ENCODE measurements at regions of chr7 and their contacts with region 1.

Region 1: GRCh38 chr7:97027427-97028234 is 3.0 kb upstream of the DLX5 start:
- DNase-seq: peak; percentile 83
- ATAC-seq: peak; percentile 82
- H3K4me3 Mint-ChIP-seq: peak overlapping the region; percentile 49
- H3K27ac Mint-ChIP-seq: no peak overlapping the region
- H3K4me1 Mint-ChIP-seq: peaks cover 36% of the 10 kb centered on the region
- H3K27me3 Mint-ChIP-seq: peaks cover 60% of the 10 kb centered on the region

Region 2: GRCh38 chr7:96075510-96076349 is 951.9 kb before region 1 on chr7:
- CTCF ChIA-PET with region 1: interaction called, 5 read pairs
- POLR2A ChIA-PET with region 1: no interaction called
- intact Hi-C with region 1: loop called (anchors 1 kb)
- DNase-seq: peak; percentile 71
- ATAC-seq: peak; percentile 81
- H3K4me3 Mint-ChIP-seq: peak overlapping the region; percentile 69
- H3K27ac Mint-ChIP-seq: no peak overlapping the region
- H3K4me1 Mint-ChIP-seq: peaks cover 8% of the 10 kb centered on the region
- H3K27me3 Mint-ChIP-seq: peaks cover 34% of the 10 kb centered on the region

Region 3: GRCh38 chr7:96786261-96786997 is 241.2 kb before region 1 on chr7:
- CTCF ChIA-PET with region 1: no interaction called
- POLR2A ChIA-PET with region 1: no interaction called
- intact Hi-C with region 1: loop called in 1 of 2 experiments (anchors 10 kb)
- DNase-seq: no peak
- ATAC-seq: no peak
- H3K4me3 Mint-ChIP-seq: no peak overlapping the region
- H3K27ac Mint-ChIP-seq: no peak overlapping the region
- H3K4me1 Mint-ChIP-seq: no peaks in the 10 kb centered on the region
- H3K27me3 Mint-ChIP-seq: peaks cover 9% of the 10 kb centered on the region

Region 4: DNA sequence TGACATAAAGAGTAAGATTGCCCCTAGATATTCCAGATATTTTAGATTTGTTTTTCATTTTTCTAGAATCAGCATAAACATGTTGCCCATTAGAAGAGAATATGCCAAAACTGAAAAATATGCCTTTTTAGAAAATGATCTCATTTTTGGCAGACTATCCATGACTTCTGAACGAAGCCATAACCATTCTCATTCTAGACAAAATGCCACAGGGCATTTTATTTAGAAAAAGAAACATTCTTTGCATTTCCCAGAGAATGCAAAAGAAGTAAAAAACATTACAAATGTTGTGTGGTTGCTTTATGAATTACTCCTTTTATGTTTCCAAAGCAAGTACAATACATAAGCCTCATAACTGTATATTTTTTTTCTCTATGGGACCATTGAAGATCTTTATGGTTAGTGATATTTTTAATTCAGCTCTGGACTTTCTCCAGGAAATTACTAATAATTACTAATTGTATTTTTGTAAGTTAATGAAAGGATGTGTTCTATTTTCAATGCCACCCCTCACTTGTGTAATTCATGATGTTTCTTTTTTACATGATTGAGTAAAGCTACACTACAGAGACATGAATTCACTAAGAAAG is 208.4 kb before region 1 on chr7:
- CTCF ChIA-PET with region 1: no interaction called
- POLR2A ChIA-PET with region 1: no interaction called
- intact Hi-C with region 1: no loop called
- DNase-seq: no peak
- ATAC-seq: no peak
- H3K4me3 Mint-ChIP-seq: no peak overlapping the region
- H3K27ac Mint-ChIP-seq: no peak overlapping the region
- H3K4me1 Mint-ChIP-seq: peaks cover 2% of the 10 kb centered on the region
- H3K27me3 Mint-ChIP-seq: peaks cover 37% of the 10 kb centered on the region

Region 5: GRCh38 chr7:97006036-97006815 is 21.4 kb before region 1 on chr7:
- CTCF ChIA-PET with region 1: interaction called, 10 read pairs
- POLR2A ChIA-PET with region 1: no interaction called
- intact Hi-C with region 1: loop called (anchors 1 to 2 kb)
- DNase-seq: peak; percentile 71
- ATAC-seq: peak; percentile 70
- H3K4me3 Mint-ChIP-seq: peak overlapping the region; percentile 65
- H3K27ac Mint-ChIP-seq: no peak overlapping the region
- H3K4me1 Mint-ChIP-seq: peaks cover 14% of the 10 kb centered on the region
- H3K27me3 Mint-ChIP-seq: peaks cover 75% of the 10 kb centered on the region

Region 6: DNA sequence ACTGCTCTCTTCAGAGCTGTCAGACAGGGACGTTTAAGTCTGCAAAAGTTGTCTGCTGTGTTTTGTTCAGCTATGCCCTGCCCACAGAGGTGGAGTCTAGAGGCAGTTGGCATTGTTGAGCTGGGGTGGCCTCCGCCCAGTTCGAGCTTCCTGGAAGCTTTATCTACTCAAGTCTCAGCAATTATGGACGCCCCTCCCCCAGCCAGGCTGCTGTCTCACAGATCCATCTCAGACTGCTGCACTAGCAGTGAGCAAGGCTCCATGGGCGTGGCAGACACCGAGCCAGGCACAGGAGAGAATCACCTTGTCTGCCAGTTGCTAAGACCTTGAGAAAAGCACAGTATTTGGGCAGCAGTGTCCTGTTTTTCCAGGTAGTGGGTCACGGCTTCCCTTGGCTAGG is 187.9 kb after region 1 on chr7:
- CTCF ChIA-PET with region 1: no interaction called
- POLR2A ChIA-PET with region 1: no interaction called
- intact Hi-C with region 1: no loop called
- DNase-seq: no peak
- ATAC-seq: no peak
- H3K4me3 Mint-ChIP-seq: no peak overlapping the region
- H3K27ac Mint-ChIP-seq: no peak overlapping the region
- H3K4me1 Mint-ChIP-seq: no peaks in the 10 kb centered on the region
- H3K27me3 Mint-ChIP-seq: peaks cover 19% of the 10 kb centered on the region

Region 7: DNA sequence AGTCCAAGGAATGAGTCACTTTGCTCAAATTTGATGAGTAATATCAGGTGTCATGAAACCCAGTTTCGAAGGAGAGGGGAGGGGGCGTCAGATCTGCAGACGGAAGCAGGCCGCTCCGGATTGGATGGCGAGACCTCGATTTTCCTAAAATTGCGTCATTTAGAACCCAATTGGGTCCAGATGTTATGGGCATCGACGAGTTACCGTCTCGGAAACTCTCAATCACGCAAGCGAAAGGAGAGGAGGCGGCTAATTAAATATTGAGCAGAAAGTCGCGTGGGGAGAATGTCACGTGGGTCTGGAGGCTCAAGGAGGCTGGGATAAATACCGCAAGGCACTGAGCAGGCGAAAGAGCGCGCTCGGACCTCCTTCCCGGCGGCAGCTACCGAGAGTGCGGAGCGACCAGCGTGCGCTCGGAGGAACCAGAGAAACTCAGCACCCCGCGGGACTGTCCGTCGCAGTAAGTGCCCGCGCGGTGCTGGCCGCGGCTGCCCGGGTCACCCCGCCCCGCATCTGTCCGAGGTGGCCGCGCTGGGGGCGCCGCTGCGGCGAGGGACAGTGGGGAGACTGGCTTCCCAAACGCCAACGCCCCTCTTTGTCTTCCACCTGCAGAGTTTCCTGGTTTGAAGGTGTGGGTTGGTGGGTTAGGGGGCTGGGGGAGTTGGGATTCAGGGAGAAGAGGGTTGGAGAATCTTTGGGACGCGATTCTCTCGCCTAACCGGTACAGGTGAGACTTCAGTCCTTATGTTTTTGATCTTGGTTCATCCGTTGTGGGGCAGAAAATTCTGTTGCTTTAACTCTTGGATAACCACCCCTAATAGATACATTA is 704.3 kb after region 1 on chr7 and contains the start of gene TAC1:
- CTCF ChIA-PET with region 1: no interaction called
- POLR2A ChIA-PET with region 1: no interaction called
- intact Hi-C with region 1: loop called in 1 of 2 experiments (anchors 10 kb)
- DNase-seq: peak; percentile 20
- ATAC-seq: no peak
- H3K4me3 Mint-ChIP-seq: peak within 1 kb of the TSS; percentile 27
- H3K27ac Mint-ChIP-seq: no peak within 1 kb of the TSS
- H3K4me1 Mint-ChIP-seq: peaks cover 25% of the 10 kb centered on the region
- H3K27me3 Mint-ChIP-seq: peaks cover 58% of the 10 kb centered on the region
- total RNA-seq, gene TAC1: 0.54 to 0.62 TPM

Measured in activated CD4-positive, alpha-beta T cell treated with anti-CD3 and anti-CD28 coated beads for 36 hours (primary cell).